ENCODE measurements at regions of chr11 and their contacts with region 1.

Region 1: GRCh38 chr11:112103446-112103845 is 16.8 kb downstream of the SDHD start:
- DNase-seq: no peak
- ATAC-seq: no peak
- H3K4me3 ChIP-seq: no peak overlapping the region
- H3K27ac ChIP-seq: no peak overlapping the region
- H3K4me1 ChIP-seq: no peaks in the 10 kb centered on the region
- CTCF ChIP-seq: no peak
- EP300 ChIP-seq: no peak
- POLR2A ChIP-seq: no peak
- RAD21 ChIP-seq: no peak

Region 2: GRCh38 chr11:112162761-112163546 is 59.5 kb after region 1 on chr11:
- CTCF ChIA-PET with region 1: interaction called, 6 read pairs
- POLR2A ChIA-PET with region 1: interaction called, 10 read pairs
- DNase-seq: peak in 1 of 2 experiments; percentile 38
- ATAC-seq: peak; percentile 52 to 59; a peak in 4 of 6 replicates
- H3K4me3 ChIP-seq: peak overlapping the region; percentile 80
- H3K27ac ChIP-seq: peak overlapping the region; percentile 82 to 85
- H3K4me1 ChIP-seq: peaks cover 69% of the 10 kb centered on the region
- CTCF ChIP-seq: no peak
- EP300 ChIP-seq: no peak
- POLR2A ChIP-seq: no peak
- RAD21 ChIP-seq: no peak

Measured in A549 (cell line).